ENCODE measurements at regions of chr3 and their contacts with region 1.

Region 1: GRCh38 chr3:133487920-133488540 is 85.5 kb upstream of the CDV3 start:
- DNase-seq: no peak
- H3K4me3 ChIP-seq: no peak overlapping the region
- H3K27ac ChIP-seq: no peak overlapping the region
- H3K27me3 ChIP-seq: no peaks in the 10 kb centered on the region
- CTCF ChIP-seq: peak; percentile 71

Region 2: DNA sequence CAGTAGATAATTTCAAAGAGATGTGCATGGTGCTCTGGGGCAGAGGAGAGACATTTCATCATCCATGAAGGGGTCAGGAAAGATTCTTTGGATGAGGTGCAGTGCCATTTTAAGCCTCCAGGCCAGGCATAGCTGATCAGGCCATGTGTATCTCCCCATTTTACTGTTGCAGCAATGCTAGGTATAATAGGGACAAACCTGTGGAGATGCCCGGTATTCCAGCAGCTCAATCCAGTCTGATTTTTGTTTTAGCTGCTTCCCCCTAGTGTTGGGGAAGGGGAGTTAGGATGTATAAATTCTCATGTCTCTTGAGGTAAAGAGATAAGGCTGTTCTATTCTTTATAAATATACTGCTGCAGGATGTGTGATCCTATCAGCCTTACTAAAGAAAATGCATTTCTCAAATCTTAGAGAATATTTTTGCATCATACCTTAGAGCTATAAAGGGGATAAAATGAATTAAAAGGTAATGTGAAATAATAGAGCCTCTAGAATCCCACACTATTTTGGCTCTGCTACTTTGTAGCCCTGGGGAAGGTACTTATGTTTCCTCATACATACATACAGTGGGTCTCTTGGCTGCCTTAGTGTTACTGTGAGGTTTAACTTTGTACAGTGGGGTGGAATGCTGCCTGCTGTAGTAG is 90.6 kb after region 1 on chr3:
- in situ Hi-C with region 1: loop called (anchors 25 kb)
- DNase-seq: no peak
- H3K4me3 ChIP-seq: no peak overlapping the region
- H3K27ac ChIP-seq: no peak overlapping the region
- H3K27me3 ChIP-seq: no peaks in the 10 kb centered on the region
- CTCF ChIP-seq: peak; percentile 68